Activated B cell treated with CpG ODN at 0.5 μM for 24 hours (primary cell): ENCODE measurements at regions of chr12 and their contacts with region 1.

Region 1: GRCh38 chr12:40137252-40137651 is 31.4 kb upstream of the SLC2A13 start:
- DNase-seq: no peak
- ATAC-seq: peak; percentile 79
- H3K4me3 Mint-ChIP-seq: no peak overlapping the region
- H3K27ac Mint-ChIP-seq: no peak overlapping the region
- H3K4me1 Mint-ChIP-seq: peaks cover 8% of the 10 kb centered on the region
- H3K27me3 Mint-ChIP-seq: no peaks in the 10 kb centered on the region
- CTCF ChIP-seq: no peak

Region 2: GRCh38 chr12:39813776-39814175 is 323.5 kb before region 1 on chr12:
- CTCF ChIA-PET with region 1: no interaction called
- POLR2A ChIA-PET with region 1: no interaction called
- intact Hi-C with region 1: no loop called
- DNase-seq: no peak
- ATAC-seq: no peak
- H3K4me3 Mint-ChIP-seq: no peak overlapping the region
- H3K27ac Mint-ChIP-seq: no peak overlapping the region
- H3K4me1 Mint-ChIP-seq: no peaks in the 10 kb centered on the region
- H3K27me3 Mint-ChIP-seq: no peaks in the 10 kb centered on the region
- CTCF ChIP-seq: no peak

Region 3: DNA sequence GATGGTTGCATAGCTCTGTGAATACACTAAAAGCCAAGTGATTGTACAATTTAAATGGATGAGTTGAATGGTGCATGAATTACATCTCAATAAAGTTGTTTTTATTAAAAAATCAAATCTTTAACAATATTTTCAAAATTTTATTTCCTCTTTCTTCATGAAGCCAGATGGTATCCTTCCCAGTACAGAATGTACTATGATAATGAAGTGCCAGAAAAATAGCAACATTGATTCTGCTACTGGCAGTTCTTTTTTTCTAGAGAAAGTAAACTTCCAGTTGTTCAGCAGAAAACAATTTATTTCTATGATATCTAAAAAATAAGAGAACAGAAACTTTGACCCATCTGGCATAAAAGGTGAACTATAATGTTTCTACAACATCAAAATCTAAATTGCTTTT is 92.9 kb before region 1 on chr12:
- CTCF ChIA-PET with region 1: no interaction called
- POLR2A ChIA-PET with region 1: no interaction called
- intact Hi-C with region 1: no loop called
- DNase-seq: no peak
- ATAC-seq: no peak
- H3K4me3 Mint-ChIP-seq: no peak overlapping the region
- H3K27ac Mint-ChIP-seq: no peak overlapping the region
- H3K4me1 Mint-ChIP-seq: no peaks in the 10 kb centered on the region
- H3K27me3 Mint-ChIP-seq: no peaks in the 10 kb centered on the region
- CTCF ChIP-seq: no peak

Region 4: GRCh38 chr12:40117818-40118217 is 19.4 kb before region 1 on chr12:
- CTCF ChIA-PET with region 1: no interaction called
- POLR2A ChIA-PET with region 1: no interaction called
- intact Hi-C with region 1: loop called (anchors 2 kb)
- DNase-seq: no peak
- ATAC-seq: peak; percentile 64
- H3K4me3 Mint-ChIP-seq: peak overlapping the region; percentile 24
- H3K27ac Mint-ChIP-seq: peak overlapping the region; percentile 55
- H3K4me1 Mint-ChIP-seq: peaks cover 12% of the 10 kb centered on the region
- H3K27me3 Mint-ChIP-seq: no peaks in the 10 kb centered on the region
- CTCF ChIP-seq: no peak

Region 5: GRCh38 chr12:40181490-40181889 is 44.2 kb after region 1 on chr12:
- CTCF ChIA-PET with region 1: no interaction called
- POLR2A ChIA-PET with region 1: no interaction called
- intact Hi-C with region 1: no loop called
- DNase-seq: no peak
- ATAC-seq: no peak
- H3K4me3 Mint-ChIP-seq: no peak overlapping the region
- H3K27ac Mint-ChIP-seq: no peak overlapping the region
- H3K4me1 Mint-ChIP-seq: no peaks in the 10 kb centered on the region
- H3K27me3 Mint-ChIP-seq: no peaks in the 10 kb centered on the region
- CTCF ChIP-seq: no peak